Endothelial cell of umbilical vein (primary cell): ENCODE measurements at regions of chr19 and their contacts with region 1.

Region 1: GRCh38 chr19:3035542-3036118 is 6.5 kb upstream of the TLE2 start:
- DNase-seq: peak; percentile 100
- H3K4me3 ChIP-seq: peak overlapping the region; percentile 39 to 73 (median 73)
- H3K27ac ChIP-seq: peak overlapping the region; percentile 77
- H3K4me1 ChIP-seq: peaks cover 12% of the 10 kb centered on the region
- H3K27me3 ChIP-seq: peaks cover 0 to 3% of the 10 kb centered on the region in 2 experiments
- CTCF ChIP-seq: no peak
- POLR2A ChIP-seq: peak; percentile 44

Region 2: GRCh38 chr19:2962045-2962561 is 73.5 kb before region 1 on chr19:
- CTCF ChIA-PET with region 1: interaction called, 21 read pairs
- POLR2A ChIA-PET with region 1: no interaction called
- dilution Hi-C with region 1: no loop called
- intact Hi-C with region 1: no loop called
- DNase-seq: peak; percentile 89
- H3K4me3 ChIP-seq: no peak overlapping the region
- H3K27ac ChIP-seq: no peak overlapping the region
- H3K4me1 ChIP-seq: no peaks in the 10 kb centered on the region
- H3K27me3 ChIP-seq: no peaks in the 10 kb centered on the region
- CTCF ChIP-seq: peak; percentile 51 to 52
- POLR2A ChIP-seq: no peak

Region 3: DNA sequence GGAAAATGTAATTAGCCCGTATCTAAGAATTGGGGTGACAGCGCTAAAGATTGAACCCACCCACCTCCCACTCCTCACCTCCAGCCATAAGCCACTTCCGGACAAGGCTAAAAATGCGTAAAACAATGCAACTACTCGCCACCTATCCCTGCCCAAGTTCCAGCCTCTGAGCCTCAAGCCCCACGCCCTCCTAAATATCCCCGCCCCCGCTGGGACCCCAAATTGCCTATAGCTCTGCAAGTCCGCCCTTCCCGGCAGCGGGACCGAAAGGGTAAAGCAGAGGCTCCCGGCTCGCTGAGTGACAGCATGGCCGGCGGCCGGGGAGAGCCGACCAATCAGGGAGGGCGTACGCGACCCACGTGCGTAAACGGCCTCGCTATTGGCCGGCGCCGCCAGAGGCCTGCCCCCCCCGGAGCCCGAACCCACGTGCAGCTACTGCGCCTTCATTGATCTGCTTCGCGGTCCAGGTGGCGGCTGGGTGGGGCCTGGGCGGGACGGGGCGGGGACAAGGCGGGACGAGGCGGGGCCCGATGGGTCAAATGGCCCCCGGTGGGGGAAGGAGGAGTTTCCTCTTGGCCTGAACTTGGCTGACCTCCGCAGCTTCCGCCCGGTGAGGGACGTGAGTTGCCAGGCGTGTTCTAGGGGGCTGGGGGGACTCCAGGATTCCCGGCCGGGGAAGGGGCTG is 58.5 kb before region 1 on chr19 and contains the start of gene TLE6:
- CTCF ChIA-PET with region 1: interaction called, 6 read pairs
- POLR2A ChIA-PET with region 1: no interaction called
- dilution Hi-C with region 1: no loop called
- intact Hi-C with region 1: loop called (anchors 1 kb)
- DNase-seq: peak; percentile 92
- H3K4me3 ChIP-seq: peak within 1 kb of the TSS; percentile 15 to 47 (median 33)
- H3K27ac ChIP-seq: peak within 1 kb of the TSS; percentile 40
- H3K4me1 ChIP-seq: peaks cover 18% of the 10 kb centered on the region
- H3K27me3 ChIP-seq: no peaks in the 10 kb centered on the region
- CTCF ChIP-seq: no peak
- POLR2A ChIP-seq: no peak
- total RNA-seq, gene TLE6: 1.9 and 2.0 TPM in 2 replicates

Region 4: DNA sequence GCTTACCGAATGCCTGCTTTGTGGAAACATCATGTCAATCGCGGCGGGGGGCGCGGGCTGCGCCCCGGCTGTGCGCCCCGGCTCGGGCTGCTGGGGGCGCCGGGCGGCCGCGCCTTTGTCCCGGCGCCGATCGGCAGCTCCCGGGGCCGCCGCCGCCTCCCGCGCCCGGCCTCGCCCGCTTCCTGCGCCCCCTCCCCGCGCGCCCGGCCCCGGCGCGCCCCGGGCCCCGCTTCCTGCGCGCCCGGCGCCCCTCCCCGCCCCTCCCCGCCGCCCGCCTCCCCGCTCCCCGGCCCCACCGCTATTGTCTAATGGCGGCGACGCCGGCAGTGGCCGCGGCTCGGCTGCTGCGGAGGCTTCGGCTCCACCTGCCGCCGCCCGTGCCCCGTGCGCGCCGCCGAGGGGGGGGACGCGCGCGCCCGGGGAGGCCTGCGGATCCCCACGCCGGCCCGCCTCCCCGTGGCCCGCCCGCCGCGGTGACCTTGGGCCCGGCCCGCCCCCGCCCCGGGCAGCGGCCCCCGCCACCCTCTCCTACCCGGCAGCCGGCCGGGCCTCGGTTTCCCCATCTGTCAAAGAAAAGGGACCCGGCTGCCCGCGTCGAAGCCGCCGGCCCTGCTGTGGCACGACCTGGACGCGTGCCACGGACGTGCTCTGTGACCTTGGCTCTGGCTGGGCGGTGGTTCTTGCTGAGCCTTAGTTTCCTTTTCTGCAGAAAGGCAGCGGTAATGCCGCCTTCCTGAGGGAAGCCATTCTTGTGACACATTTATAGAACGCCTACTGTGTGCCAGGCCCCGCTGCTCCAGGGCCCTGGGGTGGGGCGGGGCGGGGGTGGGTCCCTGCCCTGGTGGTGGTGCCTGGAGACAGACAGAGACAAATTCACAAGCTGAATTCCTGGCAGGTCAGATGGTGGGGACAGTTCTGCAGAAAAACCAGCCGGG is 26.8 kb after region 1 on chr19 and contains the start of gene TLE5:
- CTCF ChIA-PET with region 1: interaction called, 16 read pairs
- POLR2A ChIA-PET with region 1: no interaction called
- dilution Hi-C with region 1: no loop called
- intact Hi-C with region 1: loop called (anchors 1 kb)
- DNase-seq: peak; percentile 28
- H3K4me3 ChIP-seq: peak within 1 kb of the TSS; percentile 58 to 80 (median 80)
- H3K27ac ChIP-seq: peak within 1 kb of the TSS; percentile 56
- H3K4me1 ChIP-seq: peaks cover 3% of the 10 kb centered on the region
- H3K27me3 ChIP-seq: no peaks in the 10 kb centered on the region
- CTCF ChIP-seq: no peak
- POLR2A ChIP-seq: peak; percentile 59
- total RNA-seq, gene TLE5: 393 and 394 TPM in 2 replicates

Region 5: GRCh38 chr19:3108775-3109174 is 73.1 kb after region 1 on chr19:
- CTCF ChIA-PET with region 1: interaction called, 32 read pairs
- POLR2A ChIA-PET with region 1: no interaction called
- dilution Hi-C with region 1: no loop called
- intact Hi-C with region 1: no loop called
- DNase-seq: peak; percentile 62
- H3K4me3 ChIP-seq: no peak overlapping the region
- H3K27ac ChIP-seq: no peak overlapping the region
- H3K4me1 ChIP-seq: no peaks in the 10 kb centered on the region
- H3K27me3 ChIP-seq: no peaks in the 10 kb centered on the region
- CTCF ChIP-seq: peak; percentile 85 to 93
- POLR2A ChIP-seq: no peak

Region 6: DNA sequence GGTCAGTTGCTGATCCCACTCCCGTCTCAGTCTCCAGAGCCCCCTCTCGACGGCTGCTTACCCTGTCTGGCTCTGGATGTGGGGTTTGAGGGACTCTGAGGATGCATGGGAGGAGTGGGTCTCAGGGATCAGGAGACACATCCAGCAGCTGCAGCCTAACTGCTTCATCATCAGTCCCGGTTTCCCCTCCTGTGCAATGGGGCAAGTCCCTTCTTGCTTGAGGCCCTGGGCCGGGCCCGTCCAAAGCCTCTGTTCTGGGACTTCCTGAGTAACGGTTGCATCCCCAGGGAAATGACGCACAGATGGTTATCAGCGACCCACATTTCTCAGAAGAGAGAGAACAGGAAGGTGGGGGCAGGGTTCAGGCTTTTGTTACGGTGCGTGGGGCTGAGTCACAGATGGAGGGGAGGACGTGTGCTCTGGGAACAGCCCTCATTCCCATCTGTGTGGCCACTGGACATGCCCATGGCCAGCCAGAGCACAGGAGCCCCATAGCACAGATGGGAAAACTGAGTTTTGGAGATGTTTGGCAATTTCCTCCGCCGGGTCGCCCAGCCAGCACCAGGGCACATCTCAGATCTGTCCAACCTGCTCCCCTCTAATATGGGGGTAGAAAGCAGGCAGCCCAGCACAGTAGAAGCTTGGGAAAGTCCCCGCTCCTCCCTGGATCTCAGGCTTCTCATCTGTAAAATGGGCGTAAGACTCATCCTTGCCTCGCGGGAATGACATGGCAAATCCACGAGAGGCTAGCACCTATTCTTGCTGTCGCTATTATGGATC is 119.5 kb after region 1 on chr19:
- CTCF ChIA-PET with region 1: no interaction called
- POLR2A ChIA-PET with region 1: no interaction called
- dilution Hi-C with region 1: no loop called
- intact Hi-C with region 1: loop called (anchors 1 kb)
- DNase-seq: peak; percentile 100
- H3K4me3 ChIP-seq: peak overlapping the region in 1 of 3 experiments; percentile 6
- H3K27ac ChIP-seq: peak overlapping the region; percentile 99
- H3K4me1 ChIP-seq: peaks cover 13% of the 10 kb centered on the region
- H3K27me3 ChIP-seq: no peaks in the 10 kb centered on the region
- CTCF ChIP-seq: no peak
- POLR2A ChIP-seq: peak; percentile 91